Caco-2 (cell line): ENCODE measurements at regions of chr18 and their contacts with region 1.

Region 1: GRCh38 chr18:27136208-27136535 is 48.9 kb downstream of the CHST9 start:
- DNase-seq: peak; percentile 47 to 68
- H3K4me3 ChIP-seq: no peak overlapping the region
- H3K4me3 Mint-ChIP-seq: no peak overlapping the region
- H3K27ac Mint-ChIP-seq: peak overlapping the region; percentile 27
- H3K4me1 ChIP-seq: peaks cover 14% of the 10 kb centered on the region
- H3K4me1 Mint-ChIP-seq: peaks cover 15% of the 10 kb centered on the region
- H3K27me3 ChIP-seq: no peaks in the 10 kb centered on the region
- H3K27me3 Mint-ChIP-seq: no peaks in the 10 kb centered on the region
- CTCF ChIP-seq: no peak

Region 2: DNA sequence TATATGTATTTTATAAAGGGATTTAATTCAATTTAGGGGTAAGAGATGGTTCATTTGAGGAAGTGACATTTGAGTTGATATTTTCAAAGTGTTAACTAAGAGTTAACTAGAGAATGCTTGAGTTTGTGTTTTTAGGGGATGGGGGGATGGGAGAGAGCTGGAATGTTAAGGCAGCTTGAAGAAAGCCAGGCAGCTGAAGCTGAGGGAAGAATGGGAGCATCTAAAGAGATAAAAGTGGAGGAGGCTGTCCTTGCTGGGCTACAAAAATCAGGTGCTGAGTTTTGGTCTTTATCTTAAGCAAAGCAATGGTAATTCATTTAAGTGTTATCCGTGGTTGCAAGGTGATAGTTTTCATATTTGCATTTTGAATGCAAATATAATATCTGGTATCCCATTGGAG is 39.7 kb after region 1 on chr18:
- CTCF ChIA-PET with region 1: no interaction called
- POLR2A ChIA-PET with region 1: no interaction called
- intact Hi-C with region 1: loop called (anchors 5 kb)
- DNase-seq: no peak
- H3K4me3 ChIP-seq: no peak overlapping the region
- H3K4me3 Mint-ChIP-seq: no peak overlapping the region
- H3K27ac Mint-ChIP-seq: no peak overlapping the region
- H3K4me1 ChIP-seq: peaks cover 19% of the 10 kb centered on the region; the same call in 1 of the 2 replicates
- H3K4me1 Mint-ChIP-seq: peaks cover 14% of the 10 kb centered on the region
- H3K27me3 ChIP-seq: no peaks in the 10 kb centered on the region
- H3K27me3 Mint-ChIP-seq: no peaks in the 10 kb centered on the region
- CTCF ChIP-seq: no peak

Region 3: GRCh38 chr18:27298214-27298804 is 162.1 kb after region 1 on chr18:
- CTCF ChIA-PET with region 1: no interaction called
- POLR2A ChIA-PET with region 1: no interaction called
- intact Hi-C with region 1: loop called (anchors 10 kb)
- DNase-seq: peak in 1 of 2 experiments; percentile 7
- H3K4me3 ChIP-seq: no peak overlapping the region
- H3K4me3 Mint-ChIP-seq: no peak overlapping the region
- H3K27ac Mint-ChIP-seq: no peak overlapping the region
- H3K4me1 ChIP-seq: no peaks in the 10 kb centered on the region
- H3K4me1 Mint-ChIP-seq: no peaks in the 10 kb centered on the region
- H3K27me3 ChIP-seq: no peaks in the 10 kb centered on the region
- H3K27me3 Mint-ChIP-seq: peaks cover 2% of the 10 kb centered on the region
- CTCF ChIP-seq: peak; percentile 19 to 25